MCF 10A (cell line): ENCODE measurements at regions of chr14 and their contacts with region 1.

Region 1: GRCh38 chr14:24411443-24412389 is 12.9 kb downstream of the NYNRIN start:
- DNase-seq: peak; percentile 61
- H3K4me3 Mint-ChIP-seq: no peak overlapping the region
- H3K27ac Mint-ChIP-seq: no peak overlapping the region
- H3K4me1 Mint-ChIP-seq: no peaks in the 10 kb centered on the region
- H3K27me3 Mint-ChIP-seq: no peaks in the 10 kb centered on the region
- CTCF ChIP-seq: peak; percentile 58

Region 2: GRCh38 chr14:24366721-24367513 is 44.8 kb before region 1 on chr14:
- CTCF ChIA-PET with region 1: interaction called, 12 read pairs
- POLR2A ChIA-PET with region 1: no interaction called
- intact Hi-C with region 1: loop called (anchors 1 kb)
- DNase-seq: peak; percentile 97
- H3K4me3 Mint-ChIP-seq: peak overlapping the region; percentile 75
- H3K27ac Mint-ChIP-seq: peak overlapping the region; percentile 96
- H3K4me1 Mint-ChIP-seq: peaks cover 24% of the 10 kb centered on the region
- H3K27me3 Mint-ChIP-seq: no peaks in the 10 kb centered on the region
- CTCF ChIP-seq: no peak

Region 3: GRCh38 chr14:24372701-24373416 is 38.9 kb before region 1 on chr14:
- CTCF ChIA-PET with region 1: interaction called, 13 read pairs
- POLR2A ChIA-PET with region 1: no interaction called
- intact Hi-C with region 1: no loop called
- DNase-seq: peak; percentile 57
- H3K4me3 Mint-ChIP-seq: no peak overlapping the region
- H3K27ac Mint-ChIP-seq: no peak overlapping the region
- H3K4me1 Mint-ChIP-seq: no peaks in the 10 kb centered on the region
- H3K27me3 Mint-ChIP-seq: no peaks in the 10 kb centered on the region
- CTCF ChIP-seq: no peak

Region 4: GRCh38 chr14:24395609-24396582 is 15.8 kb before region 1 on chr14:
- CTCF ChIA-PET with region 1: interaction called, 26 read pairs
- POLR2A ChIA-PET with region 1: interaction called, 7 read pairs
- intact Hi-C with region 1: no loop called
- DNase-seq: no peak
- H3K4me3 Mint-ChIP-seq: no peak overlapping the region
- H3K27ac Mint-ChIP-seq: peak overlapping the region; percentile 84
- H3K4me1 Mint-ChIP-seq: peaks cover 28% of the 10 kb centered on the region
- H3K27me3 Mint-ChIP-seq: no peaks in the 10 kb centered on the region
- CTCF ChIP-seq: no peak

Region 5: DNA sequence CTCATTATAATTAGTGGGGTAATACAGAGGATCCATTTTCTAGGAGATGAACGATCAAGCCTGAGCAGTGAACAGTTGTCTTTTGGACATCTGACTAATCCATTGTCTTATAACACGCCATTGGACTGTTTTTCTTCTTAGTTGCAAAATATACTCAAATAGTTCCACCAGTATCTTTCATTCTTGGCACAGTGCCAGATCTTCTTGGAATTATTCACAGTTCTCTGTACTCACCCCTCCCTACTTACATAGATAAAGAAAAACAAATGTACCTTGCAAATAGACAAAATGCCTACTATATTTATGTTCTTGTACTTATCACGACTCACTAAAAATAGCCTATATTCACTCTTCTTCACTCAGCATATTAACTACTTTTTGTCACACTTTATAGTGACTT is 14.0 kb after region 1 on chr14:
- CTCF ChIA-PET with region 1: interaction called, 41 read pairs
- POLR2A ChIA-PET with region 1: interaction called, 5 read pairs
- intact Hi-C with region 1: no loop called
- DNase-seq: peak; percentile 84
- H3K4me3 Mint-ChIP-seq: no peak overlapping the region
- H3K27ac Mint-ChIP-seq: peak overlapping the region; percentile 80
- H3K4me1 Mint-ChIP-seq: peaks cover 31% of the 10 kb centered on the region
- H3K27me3 Mint-ChIP-seq: no peaks in the 10 kb centered on the region
- CTCF ChIP-seq: no peak

Region 6: DNA sequence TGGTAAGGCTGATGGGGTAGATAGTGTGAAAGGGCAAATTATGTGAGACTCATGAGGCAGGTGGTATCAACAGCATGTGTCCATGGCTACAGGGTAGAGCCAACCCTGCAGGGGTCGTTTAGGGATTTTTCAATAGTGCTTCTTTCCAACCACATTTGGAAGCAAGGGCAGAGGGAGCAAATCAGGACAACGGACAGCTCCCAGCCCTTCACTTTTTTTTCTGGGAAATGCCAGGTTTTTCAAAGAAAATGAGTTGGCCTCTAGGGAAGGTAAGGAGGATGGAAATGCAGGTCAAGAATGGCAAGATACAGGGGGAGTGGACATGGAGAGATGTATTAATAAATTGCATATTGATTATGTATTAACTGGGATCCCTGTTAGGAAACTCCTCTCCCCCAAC is 101.3 kb after region 1 on chr14:
- CTCF ChIA-PET with region 1: no interaction called
- POLR2A ChIA-PET with region 1: no interaction called
- intact Hi-C with region 1: no loop called
- DNase-seq: no peak
- H3K4me3 Mint-ChIP-seq: no peak overlapping the region
- H3K27ac Mint-ChIP-seq: no peak overlapping the region
- H3K4me1 Mint-ChIP-seq: no peaks in the 10 kb centered on the region
- H3K27me3 Mint-ChIP-seq: peaks cover 29% of the 10 kb centered on the region
- CTCF ChIP-seq: no peak